ENCODE measurements at regions of chr6 and their contacts with region 1.

Region 1: DNA sequence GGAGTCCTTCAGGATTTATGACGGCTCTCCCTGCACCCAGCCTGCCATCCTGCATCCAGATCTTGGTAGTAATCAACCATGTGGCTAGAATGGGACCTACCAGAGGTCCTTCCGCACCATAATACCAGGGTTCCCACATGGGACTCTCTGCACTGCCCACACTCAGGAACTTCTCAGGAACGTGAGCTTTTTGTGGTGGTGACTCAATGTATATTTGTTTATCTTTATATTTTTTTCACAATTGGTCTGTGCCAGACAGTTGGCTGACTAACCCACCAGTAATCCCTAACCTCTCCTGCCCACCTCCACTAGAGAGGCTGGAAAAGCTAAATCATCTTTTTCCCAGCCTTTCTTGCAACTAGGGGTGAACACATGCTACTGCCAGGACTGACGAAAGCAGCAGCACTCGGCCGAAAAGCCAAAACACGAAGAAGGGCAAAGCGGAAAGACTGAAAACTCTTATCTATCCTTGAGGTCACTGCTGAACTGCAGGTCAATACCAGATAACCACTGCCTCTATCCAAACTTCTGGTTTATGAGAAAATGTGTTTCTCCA is 113.0 kb downstream of the TRERF1 start:
- DNase-seq: peak; percentile 98
- ATAC-seq: peak; percentile 93
- H3K4me3 ChIP-seq: peak overlapping the region; percentile 12; the same call in 1 of the 2 replicates
- H3K27ac ChIP-seq: peak overlapping the region; percentile 94
- H3K4me1 ChIP-seq: peaks cover 33% of the 10 kb centered on the region
- H3K27me3 ChIP-seq: no peaks in the 10 kb centered on the region
- CTCF ChIP-seq: no peak

Region 2: DNA sequence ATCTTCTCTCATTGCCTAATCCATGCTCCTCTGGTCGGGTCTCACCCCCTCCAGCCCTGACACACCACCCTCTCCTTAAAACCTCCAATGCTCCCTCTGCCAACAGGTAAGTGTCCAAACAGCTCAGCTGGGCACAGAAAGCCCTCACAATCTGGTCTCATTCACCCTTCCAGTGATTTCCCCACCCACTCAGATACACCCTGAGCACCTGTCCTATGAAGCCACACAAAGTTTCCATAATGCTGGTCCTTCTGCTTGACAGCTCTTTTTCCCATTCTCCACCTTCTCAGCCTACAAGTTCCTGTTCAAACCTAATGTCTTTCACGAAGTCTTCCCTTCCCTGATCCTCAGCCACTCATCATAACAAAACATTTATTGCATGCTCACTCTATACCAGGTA is 51.0 kb before region 1 on chr6:
- CTCF ChIA-PET with region 1: no interaction called
- POLR2A ChIA-PET with region 1: no interaction called
- intact Hi-C with region 1: no loop called
- DNase-seq: no peak
- ATAC-seq: no peak
- H3K4me3 ChIP-seq: no peak overlapping the region
- H3K27ac ChIP-seq: no peak overlapping the region
- H3K4me1 ChIP-seq: peaks cover 12% of the 10 kb centered on the region
- H3K27me3 ChIP-seq: no peaks in the 10 kb centered on the region
- CTCF ChIP-seq: no peak

Region 3: GRCh38 chr6:42315991-42316378 is 22.8 kb before region 1 on chr6:
- CTCF ChIA-PET with region 1: no interaction called
- POLR2A ChIA-PET with region 1: no interaction called
- intact Hi-C with region 1: loop called (anchors 1 kb)
- DNase-seq: peak; percentile 99
- ATAC-seq: peak; percentile 86
- H3K4me3 ChIP-seq: peak overlapping the region; percentile 33; the same call in 1 of the 2 replicates
- H3K27ac ChIP-seq: peak overlapping the region; percentile 99
- H3K4me1 ChIP-seq: peaks cover 60% of the 10 kb centered on the region
- H3K27me3 ChIP-seq: no peaks in the 10 kb centered on the region
- CTCF ChIP-seq: no peak